ENCODE measurements at regions of chr5 and their contacts with region 1.

Region 1: GRCh38 chr5:142959683-142960657 is 189.8 kb downstream of the ARHGAP26 start:
- DNase-seq: no peak
- ATAC-seq: peak; percentile 66
- H3K4me3 Mint-ChIP-seq: no peak overlapping the region
- H3K27ac Mint-ChIP-seq: peak overlapping the region; percentile 40
- H3K4me1 Mint-ChIP-seq: peaks cover 18% of the 10 kb centered on the region
- H3K27me3 Mint-ChIP-seq: no peaks in the 10 kb centered on the region
- CTCF ChIP-seq: no peak

Region 2: DNA sequence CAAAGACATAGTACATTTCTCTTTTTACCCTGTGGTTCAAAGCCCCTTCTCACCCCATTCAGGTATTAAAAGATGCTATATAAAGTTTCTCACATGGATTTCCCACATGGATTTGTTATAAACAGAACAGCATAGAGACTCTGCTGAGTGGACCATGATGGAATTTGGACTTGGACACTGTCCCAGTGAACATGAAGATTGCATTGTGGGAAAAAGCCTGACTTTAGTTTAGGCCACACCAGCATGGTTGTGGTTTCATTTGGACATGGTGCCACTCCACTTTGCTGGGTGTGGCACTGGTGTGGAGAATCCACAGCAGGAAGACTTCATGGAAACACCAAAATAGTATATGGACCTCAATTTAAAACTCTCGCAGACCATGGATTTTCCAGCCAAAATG is 65.2 kb before region 1 on chr5:
- CTCF ChIA-PET with region 1: no interaction called
- POLR2A ChIA-PET with region 1: no interaction called
- intact Hi-C with region 1: no loop called
- DNase-seq: no peak
- ATAC-seq: no peak
- H3K4me3 Mint-ChIP-seq: no peak overlapping the region
- H3K27ac Mint-ChIP-seq: no peak overlapping the region
- H3K4me1 Mint-ChIP-seq: peaks cover 2% of the 10 kb centered on the region
- H3K27me3 Mint-ChIP-seq: no peaks in the 10 kb centered on the region
- CTCF ChIP-seq: no peak

Region 3: DNA sequence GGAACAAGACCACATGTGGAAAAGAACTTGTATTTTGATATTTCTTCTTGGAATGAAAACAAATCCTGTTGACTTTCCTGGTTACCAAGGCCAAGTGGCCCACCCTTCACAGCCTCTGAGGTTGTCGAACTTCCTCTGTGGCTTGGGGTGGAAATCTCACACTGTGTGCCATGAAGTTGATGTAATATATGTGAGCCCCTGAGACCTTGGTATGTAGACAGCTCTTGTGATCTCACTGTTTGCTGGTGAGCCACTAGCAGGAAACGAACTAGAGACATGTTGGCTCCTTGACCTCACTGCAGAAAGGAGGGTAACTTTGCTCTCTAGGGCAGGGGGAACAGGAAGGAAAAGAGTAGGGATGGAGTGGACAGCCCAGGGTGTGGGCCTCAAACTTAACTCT is 30.4 kb before region 1 on chr5:
- CTCF ChIA-PET with region 1: no interaction called
- POLR2A ChIA-PET with region 1: no interaction called
- intact Hi-C with region 1: no loop called
- DNase-seq: peak; percentile 18
- ATAC-seq: peak; percentile 70
- H3K4me3 Mint-ChIP-seq: no peak overlapping the region
- H3K27ac Mint-ChIP-seq: peak overlapping the region; percentile 64
- H3K4me1 Mint-ChIP-seq: peaks cover 41% of the 10 kb centered on the region
- H3K27me3 Mint-ChIP-seq: no peaks in the 10 kb centered on the region
- CTCF ChIP-seq: no peak

Region 4: DNA sequence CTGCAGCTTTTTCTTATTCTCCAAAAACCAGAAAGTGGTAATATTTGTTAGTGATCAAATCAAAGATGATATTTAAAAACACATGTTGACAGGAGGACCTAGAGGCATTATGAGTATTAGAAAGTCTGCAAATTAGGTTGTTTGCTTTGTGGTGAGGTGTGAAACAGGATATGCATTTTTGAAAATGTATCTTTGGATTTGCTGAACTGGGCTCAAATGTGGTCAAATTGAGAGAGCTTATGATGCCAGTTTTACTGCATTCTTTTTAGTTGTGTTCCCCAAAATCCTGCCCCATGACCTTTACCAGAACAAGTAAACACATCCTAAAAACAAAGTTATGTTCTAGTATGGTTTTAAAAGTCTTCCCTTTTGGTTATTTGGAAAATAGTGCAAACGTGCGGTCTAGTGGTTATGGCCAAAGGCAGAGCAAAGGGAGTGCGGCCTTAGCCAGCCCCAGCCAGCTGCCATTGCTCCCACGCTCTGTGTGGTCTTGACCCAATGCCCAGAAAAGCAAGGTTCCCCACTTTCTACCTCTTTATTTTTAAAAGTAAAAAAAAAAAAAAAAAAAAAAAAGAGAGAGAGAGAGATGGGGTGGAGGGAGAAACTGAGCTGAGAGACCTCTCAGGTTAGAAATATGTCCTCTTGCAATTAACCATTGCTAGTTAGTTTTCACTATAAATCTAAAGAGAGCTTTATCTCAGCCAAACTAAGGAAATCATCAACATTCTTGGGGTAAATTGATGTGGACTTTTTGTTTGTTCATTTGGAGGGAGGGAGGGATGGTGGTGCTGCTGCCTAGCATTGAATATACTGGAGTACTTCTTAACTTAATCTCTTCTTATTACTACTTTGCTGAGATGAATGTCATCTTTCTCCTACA is 13.2 kb before region 1 on chr5:
- CTCF ChIA-PET with region 1: interaction called, 10 read pairs
- POLR2A ChIA-PET with region 1: no interaction called
- intact Hi-C with region 1: no loop called
- DNase-seq: no peak
- ATAC-seq: no peak
- H3K4me3 Mint-ChIP-seq: no peak overlapping the region
- H3K27ac Mint-ChIP-seq: no peak overlapping the region
- H3K4me1 Mint-ChIP-seq: peaks cover 32% of the 10 kb centered on the region
- H3K27me3 Mint-ChIP-seq: no peaks in the 10 kb centered on the region
- CTCF ChIP-seq: no peak

Region 5: GRCh38 chr5:143051244-143052058 is 91.5 kb after region 1 on chr5:
- CTCF ChIA-PET with region 1: no interaction called
- POLR2A ChIA-PET with region 1: no interaction called
- intact Hi-C with region 1: no loop called
- DNase-seq: no peak
- ATAC-seq: no peak
- H3K4me3 Mint-ChIP-seq: no peak overlapping the region
- H3K27ac Mint-ChIP-seq: no peak overlapping the region
- H3K4me1 Mint-ChIP-seq: peaks cover 63% of the 10 kb centered on the region
- H3K27me3 Mint-ChIP-seq: no peaks in the 10 kb centered on the region
- CTCF ChIP-seq: no peak